Activated CD4-positive, alpha-beta T cell treated with anti-CD3 and anti-CD28 coated beads, Interleukin-2, amount 10 ng/mL, durations not matched to agents 24 days and 14 days (primary cell): ENCODE measurements at regions of chr5 and their contacts with region 1.

Region 1: GRCh38 chr5:64634997-64635686 is 55.2 kb upstream of the SHISAL2B start:
- DNase-seq: no peak
- H3K4me3 Mint-ChIP-seq: no peak overlapping the region
- H3K27ac Mint-ChIP-seq: no peak overlapping the region
- H3K4me1 Mint-ChIP-seq: peaks cover 5% of the 10 kb centered on the region
- H3K27me3 Mint-ChIP-seq: peaks cover 30% of the 10 kb centered on the region

Region 2: GRCh38 chr5:64784451-64785025 is 149.4 kb after region 1 on chr5:
- intact Hi-C with region 1: loop called (anchors 1 kb)
- DNase-seq: peak; percentile 91
- H3K4me3 Mint-ChIP-seq: no peak overlapping the region
- H3K27ac Mint-ChIP-seq: no peak overlapping the region
- H3K4me1 Mint-ChIP-seq: peaks cover 2% of the 10 kb centered on the region
- H3K27me3 Mint-ChIP-seq: no peaks in the 10 kb centered on the region